K562 (cell line): ENCODE measurements at regions of chr16 and their contacts with region 1.

Region 1: GRCh38 chr16:75251280-75252048 is at the start of gene BCAR1:
- DNase-seq: peak; percentile 92 to 96 (median 95)
- ATAC-seq: peak; percentile 91
- H3K4me3 ChIP-seq: peak within 1 kb of the TSS; percentile 84
- H3K27ac ChIP-seq: peak within 1 kb of the TSS; percentile 82; the same call in 2 of the 3 replicates
- H3K4me1 ChIP-seq: peaks cover 12 to 75% of the 10 kb centered on the region in 2 experiments; a peak in 3 of 5 replicates
- H3K27me3 ChIP-seq: no peaks in the 10 kb centered on the region
- CTCF ChIP-seq: no peak; a peak in 1 of 6 replicates
- EP300 ChIP-seq: no peak
- POLR2A ChIP-seq: no peak
- RAD21 ChIP-seq: no peak
- polyA plus RNA-seq, gene BCAR1: 0.10 to 0.13 TPM

Region 2: GRCh38 chr16:75029557-75030253 is 221.8 kb before region 1 on chr16:
- CTCF ChIA-PET with region 1: no interaction called
- POLR2A ChIA-PET with region 1: no interaction called
- in situ Hi-C with region 1: no loop called
- intact Hi-C with region 1: no loop called
- DNase-seq: no peak
- ATAC-seq: no peak
- H3K4me3 ChIP-seq: no peak overlapping the region
- H3K27ac ChIP-seq: no peak overlapping the region
- H3K4me1 ChIP-seq: peaks cover 9 to 35% of the 10 kb centered on the region in 2 experiments; a peak in 4 of 5 replicates
- H3K27me3 ChIP-seq: no peaks in the 10 kb centered on the region
- CTCF ChIP-seq: no peak
- EP300 ChIP-seq: no peak
- POLR2A ChIP-seq: no peak
- RAD21 ChIP-seq: no peak

Region 3: DNA sequence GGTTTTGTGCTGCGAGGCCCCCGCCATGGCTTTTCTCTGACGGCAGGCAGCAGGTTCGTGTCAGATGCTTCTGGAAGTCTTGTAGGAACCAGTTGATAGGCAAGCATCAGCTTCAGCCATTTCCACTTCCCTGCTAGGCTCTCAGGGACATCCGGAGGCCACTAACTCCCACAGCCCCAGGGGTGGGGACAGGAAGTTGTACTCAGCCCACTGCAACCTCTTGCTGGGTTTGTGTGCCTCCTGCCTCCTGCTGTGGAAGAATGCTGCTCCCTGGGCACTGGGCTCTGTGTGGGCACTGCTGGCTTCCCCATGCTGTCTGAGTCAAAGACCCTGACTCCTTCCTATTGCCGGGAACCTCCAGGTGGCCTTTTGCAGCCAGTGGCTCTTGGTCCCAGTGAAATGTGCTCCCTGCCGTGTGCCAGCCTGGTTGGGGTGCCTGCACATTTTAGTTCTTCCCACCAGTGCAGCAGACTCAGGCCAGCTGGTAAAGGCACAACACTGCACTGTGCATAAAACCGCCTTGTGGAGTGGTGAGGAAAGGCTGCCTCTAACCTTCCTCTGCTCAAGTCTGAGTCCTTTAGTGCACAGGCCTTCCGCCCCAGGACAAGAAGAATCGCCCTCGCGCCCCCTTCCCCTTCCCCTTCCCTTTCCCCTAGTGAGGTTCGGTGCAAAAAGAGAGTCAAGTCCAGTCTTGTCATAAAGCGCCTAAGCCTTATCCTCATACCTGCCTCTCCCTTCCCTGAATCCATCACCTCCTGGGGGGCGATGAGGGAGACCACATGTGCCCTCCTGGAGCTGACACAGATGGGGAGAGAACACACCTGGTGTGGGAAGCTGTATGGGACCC is 151.5 kb before region 1 on chr16:
- CTCF ChIA-PET with region 1: no interaction called
- POLR2A ChIA-PET with region 1: no interaction called
- in situ Hi-C with region 1: no loop called
- intact Hi-C with region 1: no loop called
- DNase-seq: no peak
- ATAC-seq: peak; percentile 67
- H3K4me3 ChIP-seq: no peak overlapping the region
- H3K27ac ChIP-seq: no peak overlapping the region
- H3K4me1 ChIP-seq: peaks cover 12 to 15% of the 10 kb centered on the region in 2 experiments
- H3K27me3 ChIP-seq: no peaks in the 10 kb centered on the region
- CTCF ChIP-seq: 0 out of 6 replicates have a peak, but pooled peaks of 2 of the 3 experiments have one; percentile 1 to 8
- EP300 ChIP-seq: no peak
- POLR2A ChIP-seq: no peak
- RAD21 ChIP-seq: peak in 1 of 2 experiments; percentile 16; a peak in 1 of 4 replicates

Region 4: DNA sequence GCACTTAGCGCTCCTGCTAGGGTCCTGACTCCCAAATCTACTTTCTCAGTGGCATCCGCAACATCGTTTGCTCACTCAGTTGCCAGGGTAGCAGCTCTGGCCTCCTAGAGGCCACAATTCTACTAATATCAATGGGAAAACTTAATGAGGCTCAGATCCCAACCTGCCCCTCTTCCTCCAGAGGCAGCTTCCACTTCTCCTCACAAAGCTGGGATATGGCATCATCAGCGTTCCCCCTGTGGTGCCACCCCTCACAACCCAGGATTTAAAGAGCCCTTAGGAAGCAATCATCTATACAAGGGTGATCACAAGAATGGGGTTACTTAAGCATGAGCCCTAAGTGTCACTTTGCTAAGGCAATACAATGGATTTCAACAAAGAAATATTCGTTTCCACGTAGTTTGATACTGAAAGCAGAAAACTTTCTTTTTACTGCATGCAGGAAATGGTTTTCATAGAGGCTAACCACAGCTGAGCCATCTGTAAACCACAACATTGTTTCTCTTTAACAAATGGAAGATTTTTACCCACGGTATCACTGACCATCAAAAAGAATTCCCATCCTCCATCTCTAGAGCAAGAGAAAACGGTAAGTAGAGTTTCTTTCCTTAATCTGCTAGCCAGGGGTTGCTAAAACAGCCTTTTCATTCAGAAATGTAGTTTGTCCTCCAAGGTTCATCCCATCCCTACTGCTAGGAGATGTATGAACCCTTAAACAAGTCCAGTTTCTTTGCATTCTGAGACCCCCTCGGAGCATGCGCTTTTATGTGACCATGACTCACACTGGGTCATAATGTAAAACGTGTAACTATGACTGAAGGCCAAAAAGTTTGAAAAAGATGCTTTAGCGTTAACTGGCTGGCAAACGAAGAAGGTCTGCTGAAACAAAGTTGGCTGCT is 68.3 kb after region 1 on chr16:
- CTCF ChIA-PET with region 1: no interaction called
- POLR2A ChIA-PET with region 1: no interaction called
- in situ Hi-C with region 1: no loop called
- intact Hi-C with region 1: loop called (anchors 5 kb)
- DNase-seq: no peak
- ATAC-seq: no peak
- H3K4me3 ChIP-seq: no peak overlapping the region
- H3K27ac ChIP-seq: no peak overlapping the region
- H3K4me1 ChIP-seq: peaks cover 10 to 13% of the 10 kb centered on the region in 2 experiments; a peak in 4 of 5 replicates
- H3K27me3 ChIP-seq: no peaks in the 10 kb centered on the region
- CTCF ChIP-seq: no peak
- EP300 ChIP-seq: no peak
- POLR2A ChIP-seq: no peak
- RAD21 ChIP-seq: no peak

Region 5: DNA sequence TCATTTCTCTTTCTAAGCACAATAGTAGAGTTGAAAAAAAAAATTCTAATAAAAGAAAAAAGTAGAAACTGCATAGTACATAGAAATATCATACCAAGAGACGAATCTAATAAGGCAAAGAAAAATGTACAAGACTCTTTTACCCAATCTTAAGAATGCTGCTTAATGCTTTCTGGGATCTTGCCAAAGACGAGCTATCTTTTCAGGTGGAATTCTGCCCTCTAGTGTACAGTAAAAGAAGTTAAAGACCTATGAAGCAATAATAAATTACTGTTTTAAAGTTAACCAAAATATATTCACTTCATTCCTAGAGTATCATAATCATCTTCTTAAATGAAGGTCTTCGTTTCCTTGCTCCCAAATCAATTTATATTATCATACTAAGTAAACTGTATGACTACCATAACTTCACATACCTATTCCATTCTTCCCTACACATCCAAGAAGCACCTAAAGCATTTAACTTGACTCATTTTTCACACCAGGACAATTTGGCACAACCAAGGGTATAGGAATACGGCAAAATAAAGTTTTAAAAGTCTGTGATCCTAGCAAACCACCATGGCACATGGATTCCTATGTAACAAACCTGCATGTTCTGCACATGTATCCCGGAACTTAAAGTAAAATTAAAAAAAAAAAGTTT is 134.2 kb after region 1 on chr16:
- CTCF ChIA-PET with region 1: interaction called, 7 read pairs
- POLR2A ChIA-PET with region 1: no interaction called
- in situ Hi-C with region 1: no loop called
- intact Hi-C with region 1: loop called (anchors 5 kb)
- DNase-seq: peak; percentile 39 to 85 (median 45)
- ATAC-seq: peak; percentile 67
- H3K4me3 ChIP-seq: no peak overlapping the region
- H3K27ac ChIP-seq: no peak overlapping the region
- H3K4me1 ChIP-seq: peaks cover 0 to 3% of the 10 kb centered on the region in 2 experiments; a peak in 1 of 5 replicates
- H3K27me3 ChIP-seq: no peaks in the 10 kb centered on the region
- CTCF ChIP-seq: peak in 2 of 3 experiments; percentile 48 to 76; a peak in 4 of 6 replicates
- EP300 ChIP-seq: no peak
- POLR2A ChIP-seq: no peak
- RAD21 ChIP-seq: peak; percentile 94